Activated CD4-positive, alpha-beta memory T cell treated with anti-CD3 and anti-CD28 coated beads for 36 hours (primary cell): ENCODE measurements at regions of chr2 and their contacts with region 1.

Region 1: GRCh38 chr2:191677646-191678436 is at the start of gene NABP1:
- DNase-seq: peak; percentile 99
- H3K4me3 Mint-ChIP-seq: peak within 1 kb of the TSS; percentile 96
- H3K27ac Mint-ChIP-seq: peak within 1 kb of the TSS; percentile 99
- H3K4me1 Mint-ChIP-seq: peaks cover 46% of the 10 kb centered on the region
- H3K27me3 Mint-ChIP-seq: peaks cover 2% of the 10 kb centered on the region
- total RNA-seq, gene NABP1: 65.1 to 65.4 TPM

Region 2: DNA sequence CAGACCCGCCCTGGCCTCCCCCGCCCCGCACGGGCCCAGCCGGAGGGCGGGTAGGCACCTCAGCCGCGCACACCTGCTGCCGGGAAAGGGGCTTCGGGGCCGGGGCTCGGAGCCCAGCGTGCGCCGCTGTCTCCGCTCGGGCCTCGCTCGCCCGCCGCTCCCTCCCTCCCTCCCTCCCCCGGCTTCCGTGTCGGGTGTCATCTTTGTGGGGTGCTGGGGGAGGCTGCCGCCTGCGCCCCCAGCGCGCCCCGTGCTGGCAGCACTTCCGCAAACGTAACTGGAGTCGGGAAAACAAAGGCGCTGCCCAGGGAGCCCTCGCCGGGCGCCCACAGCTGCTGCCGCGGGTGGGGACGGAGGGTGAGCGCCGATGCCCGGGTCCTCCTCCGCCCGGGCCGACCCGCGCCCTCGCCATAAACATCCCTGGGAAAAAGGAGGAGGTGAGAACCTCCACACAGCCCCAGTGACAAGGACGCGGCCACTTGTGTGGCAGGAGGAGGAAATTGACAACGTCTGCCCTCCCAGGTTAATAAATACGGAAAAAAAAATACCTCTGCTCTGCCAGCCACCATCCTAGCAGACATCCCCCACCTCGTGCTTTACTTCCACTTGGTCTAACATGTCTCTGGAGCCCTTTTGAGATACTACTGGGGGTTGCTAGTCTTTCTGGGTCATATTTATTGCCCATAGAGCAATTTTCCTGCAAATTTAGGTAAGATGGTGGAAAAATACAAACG is 1269.1 kb before region 1 on chr2:
- CTCF ChIA-PET with region 1: no interaction called
- POLR2A ChIA-PET with region 1: no interaction called
- intact Hi-C with region 1: loop called (anchors 5 kb)
- DNase-seq: peak; percentile 80
- H3K4me3 Mint-ChIP-seq: peak overlapping the region; percentile 82
- H3K27ac Mint-ChIP-seq: peak overlapping the region; percentile 88
- H3K4me1 Mint-ChIP-seq: peaks cover 40% of the 10 kb centered on the region
- H3K27me3 Mint-ChIP-seq: no peaks in the 10 kb centered on the region

Region 3: DNA sequence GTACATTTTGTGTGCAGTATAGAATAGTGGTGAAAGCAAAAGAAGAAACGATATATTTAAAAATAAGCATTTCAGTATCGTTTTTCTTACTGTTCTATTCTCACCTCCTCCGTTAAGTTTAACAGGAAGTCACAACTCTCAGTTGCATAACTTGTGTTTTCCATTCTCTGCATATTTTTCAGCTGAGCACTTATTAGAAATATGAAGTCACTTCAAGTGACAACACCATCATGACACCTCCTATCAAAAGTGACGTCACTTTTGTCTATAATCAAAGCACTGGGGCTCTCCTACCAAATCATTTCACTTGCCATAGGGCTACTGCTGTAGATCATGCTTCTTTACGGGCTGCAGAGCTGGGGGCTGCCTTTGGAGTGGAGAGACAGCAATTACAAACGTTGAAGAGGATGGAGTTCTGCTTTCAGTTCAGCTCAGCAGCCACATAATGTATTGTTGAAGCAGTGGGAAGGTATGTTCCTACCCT is 563.4 kb before region 1 on chr2:
- CTCF ChIA-PET with region 1: no interaction called
- POLR2A ChIA-PET with region 1: no interaction called
- intact Hi-C with region 1: loop called (anchors 2 kb)
- DNase-seq: peak; percentile 57
- H3K4me3 Mint-ChIP-seq: peak overlapping the region; percentile 66
- H3K27ac Mint-ChIP-seq: peak overlapping the region; percentile 88
- H3K4me1 Mint-ChIP-seq: peaks cover 70% of the 10 kb centered on the region
- H3K27me3 Mint-ChIP-seq: no peaks in the 10 kb centered on the region

Region 4: GRCh38 chr2:191617575-191617974 is 60.3 kb before region 1 on chr2:
- CTCF ChIA-PET with region 1: interaction called, 4 read pairs
- POLR2A ChIA-PET with region 1: interaction called, 35 read pairs
- intact Hi-C with region 1: loop called (anchors 1 kb)
- DNase-seq: peak; percentile 61
- H3K4me3 Mint-ChIP-seq: peak overlapping the region; percentile 34
- H3K27ac Mint-ChIP-seq: peak overlapping the region; percentile 94
- H3K4me1 Mint-ChIP-seq: peaks cover 58% of the 10 kb centered on the region
- H3K27me3 Mint-ChIP-seq: no peaks in the 10 kb centered on the region

Region 5: GRCh38 chr2:191650896-191651773 is 26.7 kb before region 1 on chr2:
- CTCF ChIA-PET with region 1: interaction called, 3 read pairs
- POLR2A ChIA-PET with region 1: interaction called, 7 read pairs
- intact Hi-C with region 1: loop called (anchors 2 kb)
- DNase-seq: no peak
- H3K4me3 Mint-ChIP-seq: no peak overlapping the region
- H3K27ac Mint-ChIP-seq: peak overlapping the region; percentile 1
- H3K4me1 Mint-ChIP-seq: peaks cover 9% of the 10 kb centered on the region
- H3K27me3 Mint-ChIP-seq: no peaks in the 10 kb centered on the region

Region 6: DNA sequence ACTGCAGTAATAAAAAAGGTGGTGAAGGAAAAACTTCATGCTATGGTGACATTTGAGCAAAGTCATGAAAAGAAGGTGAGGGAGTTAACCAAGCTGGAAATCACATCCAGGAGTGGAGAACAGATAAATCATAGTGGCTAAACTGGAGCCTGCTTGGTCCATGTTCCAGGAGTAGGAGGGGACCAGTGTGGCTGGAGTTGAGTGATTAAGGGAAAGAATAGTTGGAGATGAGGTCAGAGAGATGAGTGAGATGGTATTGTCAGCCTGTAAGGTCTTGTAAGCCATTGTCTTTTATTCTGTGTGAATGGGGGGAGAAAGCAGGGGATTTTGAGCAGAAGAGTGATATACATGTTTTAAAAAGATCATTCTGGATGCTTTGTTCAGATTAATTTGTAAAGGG is 52.4 kb after region 1 on chr2:
- CTCF ChIA-PET with region 1: no interaction called
- POLR2A ChIA-PET with region 1: no interaction called
- intact Hi-C with region 1: no loop called
- DNase-seq: no peak
- H3K4me3 Mint-ChIP-seq: no peak overlapping the region
- H3K27ac Mint-ChIP-seq: no peak overlapping the region
- H3K4me1 Mint-ChIP-seq: no peaks in the 10 kb centered on the region
- H3K27me3 Mint-ChIP-seq: peaks cover 1% of the 10 kb centered on the region